Activated CD8-positive, alpha-beta T cell treated with anti-CD3 and anti-CD28 coated beads, Interleukin-2, amount 10 ng/mL, durations not matched to agents 7 days and 5 days (primary cell): ENCODE measurements at regions of chr21 and their contacts with region 1.

Region 1: GRCh38 chr21:29360799-29361765 is 62.4 kb downstream of the BACH1 start:
- DNase-seq: peak; percentile 27
- ATAC-seq: no peak
- H3K4me3 Mint-ChIP-seq: no peak overlapping the region
- H3K27ac Mint-ChIP-seq: no peak overlapping the region
- H3K4me1 Mint-ChIP-seq: peaks cover 6% of the 10 kb centered on the region
- H3K27me3 Mint-ChIP-seq: no peaks in the 10 kb centered on the region

Region 2: GRCh38 chr21:29349702-29350101 is 11.4 kb before region 1 on chr21:
- CTCF ChIA-PET with region 1: interaction called, 21 read pairs
- POLR2A ChIA-PET with region 1: no interaction called
- DNase-seq: no peak
- ATAC-seq: no peak
- H3K4me3 Mint-ChIP-seq: no peak overlapping the region
- H3K27ac Mint-ChIP-seq: no peak overlapping the region
- H3K4me1 Mint-ChIP-seq: peaks cover 16% of the 10 kb centered on the region
- H3K27me3 Mint-ChIP-seq: no peaks in the 10 kb centered on the region

Region 3: GRCh38 chr21:29372063-29372802 is 11.2 kb after region 1 on chr21:
- CTCF ChIA-PET with region 1: interaction called, 45 read pairs
- POLR2A ChIA-PET with region 1: no interaction called
- DNase-seq: peak; percentile 72
- ATAC-seq: peak; percentile 83
- H3K4me3 Mint-ChIP-seq: no peak overlapping the region
- H3K27ac Mint-ChIP-seq: no peak overlapping the region
- H3K4me1 Mint-ChIP-seq: peaks cover 9% of the 10 kb centered on the region
- H3K27me3 Mint-ChIP-seq: no peaks in the 10 kb centered on the region

Region 4: DNA sequence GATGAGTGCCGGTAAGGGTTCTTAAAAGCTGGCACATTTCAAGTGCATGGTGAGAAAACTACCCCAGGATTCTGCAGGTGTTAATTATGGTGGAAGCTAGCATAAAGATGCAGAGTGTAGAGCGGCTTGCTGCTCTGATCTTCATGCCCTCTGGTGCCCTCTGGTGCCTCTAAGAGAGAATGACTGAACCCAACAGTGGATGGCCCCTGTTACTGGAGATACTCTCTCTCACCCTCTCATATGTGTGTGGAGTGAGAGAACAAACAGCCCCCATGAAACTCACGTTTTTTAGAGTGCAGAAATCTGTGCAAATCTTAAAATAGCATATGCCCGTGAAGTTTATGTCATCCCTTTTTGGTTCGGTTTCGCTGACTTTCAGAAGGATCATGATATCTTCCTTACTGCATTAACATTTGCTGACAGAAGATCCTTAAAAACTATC is 488.7 kb after region 1 on chr21:
- CTCF ChIA-PET with region 1: interaction called, 12 read pairs
- POLR2A ChIA-PET with region 1: no interaction called
- DNase-seq: peak; percentile 62
- ATAC-seq: peak; percentile 96
- H3K4me3 Mint-ChIP-seq: no peak overlapping the region
- H3K27ac Mint-ChIP-seq: no peak overlapping the region
- H3K4me1 Mint-ChIP-seq: no peaks in the 10 kb centered on the region
- H3K27me3 Mint-ChIP-seq: peaks cover 7% of the 10 kb centered on the region